Right ventricle myocardium superior (tissue), 1 donor: ENCODE measurements at regions of chr7 and their contacts with region 1.

Region 1: DNA sequence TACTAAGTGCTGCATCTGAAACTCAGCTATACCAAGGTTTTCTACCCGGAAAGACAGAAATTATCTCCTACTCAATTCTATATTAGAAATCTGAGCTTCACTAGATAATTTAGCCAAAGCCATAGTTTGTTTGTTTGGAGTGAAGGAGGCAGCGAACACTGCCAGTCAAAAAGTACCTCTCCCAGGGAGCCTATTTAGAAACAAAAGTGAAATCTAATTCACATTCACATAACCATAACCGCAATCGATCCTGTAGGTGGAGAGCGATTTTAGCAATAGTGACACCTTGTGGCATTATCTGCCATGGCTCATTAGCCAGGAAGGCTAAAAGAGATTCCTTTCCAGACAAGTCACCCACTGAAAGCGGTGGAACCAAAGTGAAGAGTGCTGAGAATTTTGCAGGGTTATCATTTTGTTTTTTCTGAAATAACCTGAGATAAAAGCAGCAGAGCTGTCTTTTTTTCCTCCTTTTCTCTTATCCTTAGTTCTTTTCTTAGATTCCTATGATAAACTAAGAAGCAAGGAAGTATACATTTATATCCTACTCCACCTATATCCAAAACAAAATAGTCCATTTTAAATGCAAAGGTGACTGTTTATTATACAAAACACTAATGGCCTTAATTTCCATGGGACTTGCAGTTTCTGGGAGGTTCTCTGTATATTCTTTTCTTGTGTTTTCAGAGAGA is 83.7 kb upstream of the BET1 start:
- DNase-seq: no peak
- ATAC-seq: peak; percentile 85

Region 2: GRCh38 chr7:93622036-93623033 is 465.5 kb before region 1 on chr7:
- intact Hi-C with region 1: loop called (anchors 10 kb)
- DNase-seq: no peak
- ATAC-seq: peak; percentile 80

Region 3: DNA sequence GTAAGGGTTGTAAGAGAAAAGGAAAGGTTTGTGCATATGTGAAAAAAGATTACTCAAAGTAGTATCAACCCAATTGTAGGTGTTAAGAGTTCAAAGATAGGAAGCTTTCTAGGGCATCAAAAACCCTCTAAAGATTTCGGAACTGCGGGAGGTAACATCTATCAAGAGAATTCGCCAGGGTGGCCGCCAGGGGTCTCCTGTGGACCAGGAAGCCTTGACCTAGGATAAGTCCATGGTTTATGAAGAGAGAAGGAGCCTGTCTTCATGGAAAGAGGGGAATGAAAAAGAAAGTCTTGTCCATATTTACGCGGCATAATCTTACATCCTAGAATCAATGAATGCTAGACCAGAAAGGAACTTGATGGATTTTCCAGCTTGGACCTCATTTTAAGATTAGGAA is 372.6 kb before region 1 on chr7:
- intact Hi-C with region 1: loop called (anchors 10 kb)
- DNase-seq: peak; percentile 68
- ATAC-seq: peak; percentile 49

Region 4: DNA sequence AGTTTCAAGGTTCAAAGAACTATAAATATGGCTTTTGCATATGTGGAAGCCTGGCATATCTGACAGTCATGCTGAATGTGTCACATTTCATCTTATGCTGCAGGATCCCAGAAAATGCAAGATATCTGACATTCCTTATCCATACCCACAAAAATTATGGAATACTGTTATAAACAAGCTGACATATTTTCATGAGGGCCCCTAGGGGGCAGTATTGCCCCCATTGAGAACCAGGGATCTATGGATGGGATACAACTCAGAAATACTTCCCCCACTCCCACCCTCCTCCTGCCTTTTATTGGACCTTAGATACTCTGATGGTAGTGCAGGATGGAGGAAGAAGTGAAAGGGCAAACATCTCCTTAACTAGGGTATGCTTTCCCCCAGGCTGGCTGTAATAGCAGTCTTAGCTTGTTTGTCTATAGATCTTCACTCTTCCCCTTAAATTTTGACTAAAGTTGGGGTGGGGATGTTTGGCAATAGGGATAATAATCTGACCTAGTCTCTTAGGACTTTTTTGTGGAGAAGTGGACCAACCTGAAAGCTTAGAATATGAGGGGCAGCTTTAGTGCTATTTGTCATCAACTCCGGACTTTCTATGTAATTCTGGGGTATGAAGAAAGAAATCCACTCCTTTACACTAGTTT is 184.9 kb before region 1 on chr7:
- intact Hi-C with region 1: loop called (anchors 5 kb)
- DNase-seq: no peak
- ATAC-seq: peak; percentile 67